ENCODE measurements at regions of chr10 and their contacts with region 1.

Region 1: GRCh38 chr10:73413528-73414229 is at the start of gene ANXA7:
- DNase-seq: peak; percentile 85 to 95 (median 94)
- ATAC-seq: peak; percentile 95
- H3K4me3 ChIP-seq: peak within 1 kb of the TSS; percentile 85 to 97
- H3K4me3 Mint-ChIP-seq: peak within 1 kb of the TSS; percentile 88
- H3K27ac ChIP-seq: peak within 1 kb of the TSS; percentile 95 to 96
- H3K27ac Mint-ChIP-seq: peak within 1 kb of the TSS; percentile 92
- H3K4me1 ChIP-seq: peaks cover 14% of the 10 kb centered on the region
- H3K4me1 Mint-ChIP-seq: peaks cover 47% of the 10 kb centered on the region
- H3K27me3 ChIP-seq: no peaks in the 10 kb centered on the region
- H3K27me3 Mint-ChIP-seq: no peaks in the 10 kb centered on the region
- CTCF ChIP-seq: no peak
- total RNA-seq, gene ANXA7: 94.8 to 95.6 TPM

Region 2: DNA sequence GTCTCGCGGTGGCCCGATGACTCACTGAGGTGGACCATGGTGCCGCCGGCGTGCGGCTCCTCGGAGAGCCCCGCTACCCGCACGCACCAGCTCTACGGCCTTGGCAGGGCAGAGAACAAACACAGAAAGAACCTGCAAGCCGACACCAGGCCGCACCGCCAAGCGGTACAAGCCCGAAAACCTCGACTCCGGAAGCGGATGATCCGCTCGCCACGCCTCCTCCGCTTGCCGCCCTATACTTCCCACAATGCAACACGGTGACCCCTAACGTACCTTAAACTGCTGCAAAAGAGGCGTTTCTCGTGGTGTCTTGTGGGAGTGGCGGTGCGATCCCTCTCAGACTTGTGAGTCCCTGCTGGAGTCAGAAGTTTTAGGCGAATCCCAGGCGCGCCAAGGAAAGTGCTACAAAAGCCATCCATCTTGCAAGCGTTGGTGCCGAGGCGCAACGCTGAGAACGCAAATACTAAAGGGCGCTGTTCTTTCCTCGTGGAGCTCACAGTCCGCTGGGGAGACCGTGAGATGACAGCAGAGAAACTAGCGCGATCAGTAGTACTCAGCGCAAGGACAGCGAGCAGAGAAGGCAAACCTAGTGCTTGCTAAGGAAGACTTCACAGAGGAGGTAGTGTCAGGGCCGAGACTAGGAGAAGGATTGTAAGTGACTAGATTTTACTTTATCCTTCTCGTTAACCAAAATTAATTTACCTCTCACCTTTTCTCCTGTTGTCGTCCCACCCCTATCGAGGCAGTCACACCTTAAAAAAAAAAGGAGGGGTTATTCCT is 161.0 kb before region 1 on chr10 and contains the start of gene MRPS16:
- CTCF ChIA-PET with region 1: no interaction called
- POLR2A ChIA-PET with region 1: interaction called, 3 read pairs
- intact Hi-C with region 1: loop called (anchors 2 kb)
- DNase-seq: peak; percentile 86 to 97 (median 93)
- ATAC-seq: peak; percentile 90
- H3K4me3 ChIP-seq: peak within 1 kb of the TSS; percentile 87 to 96
- H3K4me3 Mint-ChIP-seq: peak within 1 kb of the TSS; percentile 99
- H3K27ac ChIP-seq: peak within 1 kb of the TSS; percentile 80 to 94
- H3K27ac Mint-ChIP-seq: peak within 1 kb of the TSS; percentile 96
- H3K4me1 ChIP-seq: peaks cover 19% of the 10 kb centered on the region
- H3K4me1 Mint-ChIP-seq: peaks cover 46% of the 10 kb centered on the region
- H3K27me3 ChIP-seq: no peaks in the 10 kb centered on the region
- H3K27me3 Mint-ChIP-seq: no peaks in the 10 kb centered on the region
- CTCF ChIP-seq: no peak
- total RNA-seq, gene MRPS16: 23.6 to 28.7 TPM

Region 3: DNA sequence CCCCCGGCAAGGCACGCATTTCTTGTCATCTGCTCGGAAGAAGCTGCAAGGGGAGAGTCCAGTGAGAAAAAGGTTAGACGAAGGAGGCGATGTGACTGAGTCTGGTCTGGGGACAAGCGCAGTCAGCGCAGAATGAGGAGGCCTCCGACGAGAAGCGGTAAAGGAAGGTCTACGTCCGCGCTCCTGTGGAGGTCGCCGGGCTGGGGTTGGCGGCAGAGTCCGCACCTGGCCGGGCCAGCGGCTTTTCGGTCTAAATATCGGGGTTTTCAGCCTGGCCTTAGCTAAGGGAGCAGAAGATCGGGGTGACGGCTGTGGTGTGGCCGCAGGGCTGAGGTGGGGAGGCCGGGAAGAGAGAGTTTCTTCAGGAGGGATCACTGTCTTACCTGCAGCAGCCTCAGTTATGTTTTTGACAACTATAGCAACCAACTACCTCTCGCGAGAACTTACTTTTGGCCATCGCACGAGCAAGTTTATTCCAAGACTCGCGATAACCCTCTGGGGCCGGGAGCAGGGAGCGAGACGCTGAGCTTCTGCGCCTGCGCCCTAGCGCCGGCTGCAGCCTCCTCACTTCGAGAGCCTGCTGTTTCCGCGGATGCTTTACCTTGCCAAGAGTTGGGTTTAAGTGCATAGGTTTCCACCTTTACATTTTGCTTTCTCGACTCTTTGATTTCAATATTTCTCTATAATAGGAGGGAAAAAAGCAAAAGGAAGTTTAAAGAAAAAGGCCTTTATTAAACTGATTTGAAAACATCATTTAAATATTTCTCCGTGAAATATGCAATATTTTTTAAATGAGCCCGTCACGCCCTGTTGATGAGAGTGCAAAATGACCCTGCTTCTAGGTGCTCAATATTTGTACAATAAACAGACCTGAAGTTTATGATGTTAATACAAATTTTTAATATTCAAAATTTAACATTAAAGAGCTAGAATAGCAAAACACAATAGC is 55.1 kb before region 1 on chr10 and contains the start of gene CFAP70:
- CTCF ChIA-PET with region 1: interaction called, 4 read pairs
- POLR2A ChIA-PET with region 1: no interaction called
- intact Hi-C with region 1: loop called (anchors 1 to 2 kb)
- DNase-seq: peak; percentile 83 to 98 (median 90)
- ATAC-seq: peak; percentile 96
- H3K4me3 ChIP-seq: peak within 1 kb of the TSS; percentile 71 to 75
- H3K4me3 Mint-ChIP-seq: peak within 1 kb of the TSS; percentile 98
- H3K27ac ChIP-seq: peak within 1 kb of the TSS; percentile 78 to 88
- H3K27ac Mint-ChIP-seq: peak within 1 kb of the TSS; percentile 96
- H3K4me1 ChIP-seq: peaks cover 5% of the 10 kb centered on the region
- H3K4me1 Mint-ChIP-seq: peaks cover 16% of the 10 kb centered on the region
- H3K27me3 ChIP-seq: peaks cover 0 to 8% of the 10 kb centered on the region in 2 experiments
- H3K27me3 Mint-ChIP-seq: peaks cover 2% of the 10 kb centered on the region
- CTCF ChIP-seq: no peak
- total RNA-seq, gene CFAP70: 2.4 to 2.8 TPM

Measured in CD8-positive, alpha-beta T cell (primary cell).